Prostate gland (tissue), 2 donors: ENCODE measurements at regions of chr11 and their contacts with region 1.

Region 1: DNA sequence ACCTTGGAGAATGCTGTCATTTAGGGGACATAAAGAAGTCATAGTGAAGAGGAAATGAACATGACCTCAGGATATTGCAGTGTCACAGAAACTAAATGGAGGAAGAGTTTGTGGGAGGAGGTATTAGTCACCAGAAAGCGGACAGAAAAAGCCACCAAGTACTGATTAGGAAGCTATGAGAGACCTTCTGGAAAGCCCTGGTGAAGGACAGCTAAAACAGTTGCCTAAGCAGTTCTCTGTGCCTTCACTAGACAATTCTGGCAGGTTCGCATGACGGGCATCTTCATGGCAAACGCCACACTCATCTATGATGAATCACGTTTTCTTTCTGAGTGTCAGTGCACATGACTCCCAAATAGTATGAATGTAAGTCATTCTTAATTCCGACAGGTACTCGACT is 325.8 kb downstream of the C11orf87 start:
- DNase-seq: no peak
- H3K4me3 ChIP-seq: no peak overlapping the region
- H3K27ac ChIP-seq: no peak overlapping the region
- H3K4me1 ChIP-seq: no peaks in the 10 kb centered on the region
- H3K27me3 ChIP-seq: no peaks in the 10 kb centered on the region
- CTCF ChIP-seq: no peak
- POLR2A ChIP-seq: no peak

Region 2: GRCh38 chr11:109012991-109013390 is 734.8 kb before region 1 on chr11:
- intact Hi-C with region 1: loop called (anchors 5 kb)
- DNase-seq: no peak
- H3K4me3 ChIP-seq: no peak overlapping the region
- H3K27ac ChIP-seq: no peak overlapping the region
- H3K4me1 ChIP-seq: no peaks in the 10 kb centered on the region
- H3K27me3 ChIP-seq: no peaks in the 10 kb centered on the region
- CTCF ChIP-seq: no peak
- POLR2A ChIP-seq: no peak